ENCODE measurements at regions of chr6 and their contacts with region 1.

Region 1: GRCh38 chr6:112780498-112781096 is 433.5 kb downstream of the RFPL4B start:
- DNase-seq: peak; percentile 76
- ATAC-seq: peak; percentile 87 to 92

Region 2: DNA sequence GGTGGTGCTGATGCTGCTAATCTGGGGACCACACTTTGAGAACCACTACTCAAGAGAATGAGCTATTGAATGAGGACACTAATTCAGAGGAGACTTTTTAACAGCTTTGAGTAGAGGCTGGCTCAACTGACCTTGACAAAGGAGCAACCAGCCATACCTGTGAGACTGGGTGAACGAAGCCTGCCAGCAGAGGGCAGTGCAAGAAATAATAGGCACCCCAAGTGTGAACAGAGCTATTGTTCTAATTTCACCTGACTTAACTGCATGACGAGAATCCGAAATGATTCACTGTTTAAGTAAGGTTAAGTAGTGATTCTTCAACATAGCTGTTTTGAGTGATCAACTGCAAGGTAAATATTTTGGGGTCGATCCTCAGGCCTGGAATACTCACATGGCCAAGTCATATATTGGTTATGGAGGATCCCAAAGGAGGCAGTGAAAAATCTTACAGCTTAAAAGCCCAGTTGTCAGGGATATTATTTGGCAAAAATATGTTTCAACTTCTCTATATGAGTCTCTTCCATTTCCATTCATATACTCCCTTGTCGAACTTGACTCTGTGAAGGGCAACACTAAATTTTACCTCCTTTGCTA is 526.1 kb after region 1 on chr6:
- intact Hi-C with region 1: loop called in 1 of 2 experiments (anchors 10 kb)
- DNase-seq: peak; percentile 69
- ATAC-seq: peak in 1 of 2 donors; percentile 39

Region 3: DNA sequence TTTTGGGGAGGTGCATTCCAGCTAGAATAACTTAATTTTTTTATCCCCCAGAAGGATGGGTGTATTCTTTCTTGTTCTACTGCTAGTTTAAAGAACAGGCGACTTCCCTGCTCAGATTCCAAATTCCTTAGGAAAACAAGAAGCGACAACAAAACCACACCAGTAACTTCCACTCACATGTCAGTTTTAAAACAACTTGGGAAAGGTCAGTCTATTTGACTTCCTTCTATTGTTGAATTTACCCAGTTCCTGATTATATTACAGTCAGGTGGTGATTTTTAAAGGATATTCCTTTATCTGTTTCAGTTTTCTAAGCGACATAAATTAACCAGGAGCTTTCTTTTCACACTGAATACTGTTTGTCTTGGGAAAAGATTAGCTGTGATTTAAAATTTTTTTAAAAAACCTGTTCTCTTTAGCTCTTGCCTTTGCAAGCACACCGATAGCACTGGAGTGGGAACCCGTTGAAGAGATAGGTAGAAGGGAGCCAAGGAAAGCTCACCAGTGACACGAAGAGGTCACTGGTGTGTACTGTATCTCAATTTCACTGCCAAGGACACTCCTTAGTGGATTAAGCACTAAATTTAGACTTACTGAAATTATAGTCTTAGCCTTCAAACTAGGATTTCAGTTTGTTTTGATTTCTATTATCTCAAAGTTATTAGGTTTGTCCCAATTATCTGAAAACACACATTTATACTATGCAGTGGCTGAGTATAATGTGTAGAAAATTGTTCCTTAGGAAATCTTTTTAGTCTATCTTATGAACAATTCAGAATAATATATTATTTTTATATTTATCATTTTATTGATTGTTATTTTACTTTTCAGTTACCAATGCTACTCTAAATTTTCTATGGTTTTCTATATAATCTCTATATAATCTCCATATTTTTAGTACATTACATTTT is 1098.8 kb after region 1 on chr6:
- intact Hi-C with region 1: loop called in 1 of 2 experiments (anchors 5 kb)
- DNase-seq: peak; percentile 51
- ATAC-seq: peak; percentile 98

Region 4: GRCh38 chr6:113909234-113909856 is 1128.7 kb after region 1 on chr6:
- intact Hi-C with region 1: loop called in 1 of 2 experiments (anchors 10 kb)
- DNase-seq: no peak
- ATAC-seq: no peak

Measured in left cardiac atrium (tissue), 4 donors.